ENCODE measurements at regions of chrX and their contacts with region 1.

Region 1: DNA sequence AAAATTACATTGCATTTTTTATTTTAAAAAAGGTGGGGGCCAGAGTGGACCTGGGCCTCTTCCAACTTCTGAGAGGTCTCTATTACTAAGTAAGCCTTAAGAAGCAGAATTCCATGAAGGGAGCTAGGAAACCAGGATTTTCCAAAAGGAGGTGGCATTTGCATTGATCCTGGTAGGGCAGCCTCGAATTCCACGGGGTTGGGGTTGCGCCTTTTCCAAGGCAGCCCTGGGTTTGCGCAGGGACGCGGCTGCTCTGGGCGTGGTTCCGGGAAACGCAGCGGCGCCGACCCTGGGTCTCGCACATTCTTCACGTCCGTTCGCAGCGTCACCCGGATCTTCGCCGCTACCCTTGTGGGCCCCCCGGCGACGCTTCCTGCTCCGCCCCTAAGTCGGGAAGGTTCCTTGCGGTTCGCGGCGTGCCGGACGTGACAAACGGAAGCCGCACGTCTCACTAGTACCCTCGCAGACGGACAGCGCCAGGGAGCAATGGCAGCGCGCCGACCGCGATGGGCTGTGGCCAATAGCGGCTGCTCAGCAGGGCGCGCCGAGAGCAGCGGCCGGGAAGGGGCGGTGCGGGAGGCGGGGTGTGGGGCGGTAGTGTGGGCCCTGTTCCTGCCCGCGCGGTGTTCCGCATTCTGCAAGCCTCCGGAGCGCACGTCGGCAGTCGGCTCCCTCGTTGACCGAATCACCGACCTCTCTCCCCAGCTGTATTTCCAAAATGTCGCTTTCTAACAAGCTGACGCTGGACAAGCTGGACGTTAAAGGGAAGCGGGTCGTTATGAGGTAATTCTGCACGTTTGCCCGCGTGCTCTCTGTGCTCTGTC is at the start of gene PGK1:
- DNase-seq: peak; percentile 98
- H3K4me3 Mint-ChIP-seq: peak within 1 kb of the TSS; percentile 97
- H3K27ac Mint-ChIP-seq: peak within 1 kb of the TSS; percentile 91
- H3K4me1 Mint-ChIP-seq: peaks cover 25% of the 10 kb centered on the region
- H3K27me3 Mint-ChIP-seq: no peaks in the 10 kb centered on the region
- total RNA-seq, gene PGK1: 1,039 and 1,063 TPM in 2 replicates

Region 2: DNA sequence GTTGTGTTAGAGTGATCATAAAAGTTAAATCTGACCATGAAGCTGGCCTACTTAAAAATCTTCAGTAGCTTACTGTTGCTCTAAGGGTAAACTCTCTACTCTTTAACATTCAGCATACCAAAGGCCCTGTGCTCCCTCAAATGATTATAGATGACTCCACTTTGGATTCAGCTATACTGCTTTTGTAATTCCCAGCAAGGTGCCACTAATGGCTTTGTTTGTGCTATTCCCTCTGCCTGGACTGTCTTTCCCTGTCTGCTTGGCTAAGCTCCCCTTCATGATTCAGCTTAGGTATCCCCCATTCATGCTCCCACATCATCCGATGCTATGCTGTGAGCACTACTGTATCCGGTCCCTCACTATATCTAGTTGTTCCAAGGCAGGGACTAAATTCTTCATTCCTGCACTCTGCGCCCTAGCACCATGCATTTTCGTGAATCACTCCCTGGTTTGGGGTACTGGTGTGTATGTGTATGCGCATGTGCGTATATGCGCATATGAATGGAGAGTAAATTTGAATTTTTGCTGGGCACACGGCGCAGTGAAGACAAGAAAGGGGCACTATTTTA is 1931.4 kb before region 1 on chrX:
- intact Hi-C with region 1: loop called (anchors 10 kb)
- DNase-seq: no peak
- H3K4me3 Mint-ChIP-seq: peak overlapping the region; percentile 94
- H3K27ac Mint-ChIP-seq: peak overlapping the region; percentile 99
- H3K4me1 Mint-ChIP-seq: peaks cover 37% of the 10 kb centered on the region
- H3K27me3 Mint-ChIP-seq: no peaks in the 10 kb centered on the region

Region 3: GRCh38 chrX:77899081-77899828 is 204.6 kb before region 1 on chrX and contains the start of gene COX7B:
- intact Hi-C with region 1: loop called (anchors 2 kb)
- DNase-seq: peak; percentile 91
- H3K4me3 Mint-ChIP-seq: peak within 1 kb of the TSS; percentile 90
- H3K27ac Mint-ChIP-seq: peak within 1 kb of the TSS; percentile 97
- H3K4me1 Mint-ChIP-seq: peaks cover 9% of the 10 kb centered on the region
- H3K27me3 Mint-ChIP-seq: no peaks in the 10 kb centered on the region
- total RNA-seq, gene COX7B: 281 and 301 TPM in 2 replicates

Region 4: GRCh38 chrX:78011846-78012245 is 92.0 kb before region 1 on chrX:
- intact Hi-C with region 1: no loop called
- DNase-seq: no peak
- H3K4me3 Mint-ChIP-seq: no peak overlapping the region
- H3K27ac Mint-ChIP-seq: no peak overlapping the region
- H3K4me1 Mint-ChIP-seq: no peaks in the 10 kb centered on the region
- H3K27me3 Mint-ChIP-seq: no peaks in the 10 kb centered on the region

Region 5: GRCh38 chrX:78066110-78066509 is 37.7 kb before region 1 on chrX:
- intact Hi-C with region 1: loop called (anchors 1 kb)
- DNase-seq: no peak
- H3K4me3 Mint-ChIP-seq: no peak overlapping the region
- H3K27ac Mint-ChIP-seq: no peak overlapping the region
- H3K4me1 Mint-ChIP-seq: peaks cover 13% of the 10 kb centered on the region
- H3K27me3 Mint-ChIP-seq: no peaks in the 10 kb centered on the region

Region 6: GRCh38 chrX:78168065-78168464 is 64.2 kb after region 1 on chrX:
- intact Hi-C with region 1: no loop called
- DNase-seq: no peak
- H3K4me3 Mint-ChIP-seq: no peak overlapping the region
- H3K27ac Mint-ChIP-seq: no peak overlapping the region
- H3K4me1 Mint-ChIP-seq: no peaks in the 10 kb centered on the region
- H3K27me3 Mint-ChIP-seq: no peaks in the 10 kb centered on the region

Region 7: GRCh38 chrX:79161655-79162054 is 1057.8 kb after region 1 on chrX:
- intact Hi-C with region 1: loop called (anchors 10 kb)
- DNase-seq: peak; percentile 85
- H3K4me3 Mint-ChIP-seq: peak overlapping the region; percentile 82
- H3K27ac Mint-ChIP-seq: peak overlapping the region; percentile 98
- H3K4me1 Mint-ChIP-seq: peaks cover 40% of the 10 kb centered on the region
- H3K27me3 Mint-ChIP-seq: no peaks in the 10 kb centered on the region